ENCODE measurements at regions of chr5 and their contacts with region 1.

Region 1: DNA sequence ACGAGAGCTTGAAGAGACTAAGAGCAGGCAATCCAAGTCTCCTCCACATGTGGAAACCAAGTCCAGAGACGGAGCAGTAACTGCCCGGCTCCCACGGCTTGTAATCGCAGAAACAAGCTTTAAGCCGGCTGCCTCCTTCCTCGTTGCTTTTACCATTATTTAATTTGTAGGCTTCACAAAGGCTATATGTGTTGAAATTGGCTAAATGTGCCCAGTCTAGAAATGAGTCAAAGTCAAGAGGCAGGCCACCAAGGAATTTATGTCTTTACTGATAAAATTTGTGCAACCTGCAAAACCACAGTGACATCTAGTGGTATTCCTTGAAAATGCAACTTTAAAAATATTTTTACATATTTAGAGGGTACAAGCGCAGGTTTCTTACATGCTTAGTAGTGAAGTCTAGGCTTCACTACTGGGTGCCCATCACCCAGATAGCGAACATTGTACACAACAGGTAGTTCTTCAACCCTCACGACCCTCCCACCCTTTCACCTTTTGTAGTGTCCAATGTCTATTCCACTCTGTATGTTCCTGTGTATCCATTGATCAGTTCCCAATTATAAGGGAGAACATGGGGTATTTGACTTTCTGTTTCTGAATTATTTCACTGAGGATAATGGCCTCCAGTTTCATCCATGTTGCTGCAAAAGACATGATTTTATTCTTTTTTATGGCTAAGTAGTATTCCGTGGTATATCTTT is 33.5 kb upstream of the EBF1 start:
- DNase-seq: peak; percentile 33 to 69
- H3K4me3 ChIP-seq: peak overlapping the region; percentile 11 to 19
- H3K27ac ChIP-seq: peak overlapping the region; percentile 48 to 72
- H3K4me1 ChIP-seq: peaks cover 0 to 14% (median 3%) of the 10 kb centered on the region in 4 donors
- H3K27me3 ChIP-seq: no peaks in the 10 kb centered on the region
- CTCF ChIP-seq: peak; percentile 76 to 87

Region 2: DNA sequence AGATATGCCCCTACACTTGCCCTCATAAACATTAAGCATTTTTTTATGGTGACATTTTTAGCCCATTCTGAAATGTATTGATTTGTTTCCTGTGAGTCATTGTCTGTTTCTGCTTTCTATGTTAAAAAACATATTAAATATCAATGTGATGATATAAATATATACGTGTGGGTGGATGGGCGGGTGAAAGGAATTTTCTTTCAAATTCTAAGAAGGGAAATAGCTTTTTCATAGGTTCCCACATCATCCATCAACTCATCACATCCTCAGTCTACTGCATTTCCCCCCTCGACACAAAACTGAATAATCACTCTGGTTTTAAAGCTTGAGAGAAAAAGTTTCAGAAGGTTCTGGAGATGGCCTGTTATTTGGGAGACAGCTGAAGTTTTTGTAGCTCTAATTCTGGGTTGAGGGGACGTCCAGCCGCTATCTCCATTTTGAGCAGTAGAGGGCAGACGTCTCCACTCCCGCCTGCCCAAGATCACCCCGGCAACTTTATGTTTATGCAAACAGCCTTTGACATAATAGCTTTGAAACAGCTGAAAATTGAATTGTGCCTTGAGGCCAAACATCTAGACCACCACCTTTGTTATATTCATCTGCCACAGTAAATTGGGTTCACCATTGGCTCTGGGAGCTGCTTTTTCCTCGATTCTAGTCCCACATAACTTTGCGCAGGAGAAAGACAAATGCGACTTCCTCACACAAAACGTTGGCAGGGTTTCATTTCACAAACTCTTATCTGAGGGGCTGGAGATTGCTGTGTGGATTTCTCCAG is 1058.0 kb before region 1 on chr5:
- intact Hi-C with region 1: loop called (anchors 10 kb)
- DNase-seq: peak; percentile 43 to 70
- H3K4me3 ChIP-seq: peak overlapping the region; percentile 21 to 41
- H3K27ac ChIP-seq: no peak overlapping the region
- H3K4me1 ChIP-seq: peaks cover 0 to 5% (median 2%) of the 10 kb centered on the region in 4 donors
- H3K27me3 ChIP-seq: no peaks in the 10 kb centered on the region
- CTCF ChIP-seq: peak; percentile 76 to 82

Region 3: DNA sequence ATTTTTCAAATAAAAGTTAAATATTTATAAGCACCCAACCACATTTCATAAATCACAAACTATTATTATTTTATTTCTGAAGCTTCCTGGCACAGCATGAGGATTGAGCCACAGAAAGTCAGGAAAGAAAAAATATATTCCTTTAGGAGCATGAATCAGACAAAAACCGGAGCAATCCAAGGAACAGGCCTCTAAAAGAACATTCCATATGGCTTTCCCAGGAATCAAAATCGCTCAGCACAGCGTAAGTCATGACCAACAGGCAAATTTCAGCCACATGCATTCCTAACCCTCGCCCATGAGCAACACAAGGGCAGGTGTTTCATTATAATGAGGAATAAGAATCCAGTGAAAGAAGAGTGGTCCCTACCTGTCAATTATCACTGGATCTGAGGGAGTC is 60.2 kb before region 1 on chr5:
- intact Hi-C with region 1: no loop called
- DNase-seq: no peak
- H3K4me3 ChIP-seq: no peak overlapping the region
- H3K27ac ChIP-seq: peak overlapping the region; percentile 79 to 83
- H3K4me1 ChIP-seq: peaks cover 0 to 95% (median 46%) of the 10 kb centered on the region in 4 donors
- H3K27me3 ChIP-seq: no peaks in the 10 kb centered on the region
- CTCF ChIP-seq: no peak